Natural killer cell (primary cell): ENCODE measurements at regions of chr3 and their contacts with region 1.

Region 1: DNA sequence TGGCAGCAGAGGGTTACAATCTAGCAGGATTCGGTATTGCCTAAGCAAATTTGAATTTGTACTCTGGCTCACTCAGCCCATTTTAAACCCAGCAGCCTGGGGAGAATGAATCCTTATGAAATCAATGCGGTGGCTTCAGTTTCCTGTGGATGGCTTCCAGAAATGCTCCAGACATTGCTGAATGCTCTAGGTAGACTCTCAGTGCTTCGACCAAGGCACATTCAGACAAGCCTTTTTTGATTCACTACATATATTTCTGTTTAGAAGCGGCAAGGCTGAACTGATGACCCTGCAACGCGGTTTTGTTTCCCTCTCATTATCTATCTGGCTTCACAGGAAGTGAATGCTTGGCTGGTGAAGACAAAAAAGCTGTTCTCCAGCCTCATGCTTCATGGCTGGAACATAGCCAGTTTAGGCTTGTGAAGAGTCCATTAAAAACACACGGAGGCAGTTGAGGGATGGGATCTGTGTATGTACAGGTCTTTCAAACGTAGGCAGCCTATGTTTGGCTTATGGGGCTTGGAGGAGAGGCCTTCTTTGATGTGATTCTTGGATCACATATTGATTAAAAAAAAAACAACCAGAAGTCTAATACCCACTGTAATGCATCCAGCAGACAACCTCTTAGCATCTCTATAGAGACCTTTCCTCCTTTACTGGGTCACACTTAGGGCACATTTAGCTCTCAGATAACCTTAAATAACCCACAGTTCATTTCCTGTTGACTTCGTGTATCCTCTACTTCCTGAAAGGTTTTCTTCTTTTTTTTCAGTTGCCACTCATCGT is 400.2 kb upstream of the TBL1XR1 start:
- DNase-seq: peak; percentile 22 to 73
- ATAC-seq: peak; percentile 83 to 86 (median 84)
- H3K4me3 ChIP-seq: no peak overlapping the region
- H3K4me3 Mint-ChIP-seq: peak overlapping the region; percentile 72
- H3K27ac ChIP-seq: peak overlapping the region; percentile 52
- H3K27ac Mint-ChIP-seq: peak overlapping the region; percentile 89 to 94
- H3K4me1 ChIP-seq: peaks cover 24% of the 10 kb centered on the region
- H3K4me1 Mint-ChIP-seq: peaks cover 64 to 67% of the 10 kb centered on the region in 2 donors
- H3K27me3 ChIP-seq: no peaks in the 10 kb centered on the region
- H3K27me3 Mint-ChIP-seq: no peaks in the 10 kb centered on the region
- CTCF ChIP-seq: no peak

Region 2: GRCh38 chr3:177538750-177539730 is 58.5 kb before region 1 on chr3:
- intact Hi-C with region 1: loop called (anchors 10 kb)
- DNase-seq: peak in 1 of 2 donors; percentile 62
- ATAC-seq: peak; percentile 57 to 90 (median 74)
- H3K4me3 ChIP-seq: no peak overlapping the region
- H3K4me3 Mint-ChIP-seq: peak overlapping the region; percentile 91
- H3K27ac ChIP-seq: peak overlapping the region; percentile 63
- H3K27ac Mint-ChIP-seq: peak overlapping the region; percentile 90 to 92
- H3K4me1 ChIP-seq: peaks cover 19% of the 10 kb centered on the region
- H3K4me1 Mint-ChIP-seq: peaks cover 31 to 47% of the 10 kb centered on the region in 2 donors
- H3K27me3 ChIP-seq: no peaks in the 10 kb centered on the region
- H3K27me3 Mint-ChIP-seq: no peaks in the 10 kb centered on the region
- CTCF ChIP-seq: no peak

Region 3: GRCh38 chr3:177646749-177647148 is 49.2 kb after region 1 on chr3:
- intact Hi-C with region 1: loop called (anchors 2 kb)
- DNase-seq: peak; percentile 28 to 57
- ATAC-seq: peak; percentile 52 to 71 (median 65)
- H3K4me3 ChIP-seq: no peak overlapping the region
- H3K4me3 Mint-ChIP-seq: peak overlapping the region; percentile 91
- H3K27ac ChIP-seq: peak overlapping the region; percentile 24
- H3K27ac Mint-ChIP-seq: peak overlapping the region; percentile 88
- H3K4me1 ChIP-seq: peaks cover 36% of the 10 kb centered on the region
- H3K4me1 Mint-ChIP-seq: peaks cover 62 to 70% of the 10 kb centered on the region in 2 donors
- H3K27me3 ChIP-seq: no peaks in the 10 kb centered on the region
- H3K27me3 Mint-ChIP-seq: no peaks in the 10 kb centered on the region
- CTCF ChIP-seq: no peak

Region 4: GRCh38 chr3:177679568-177680441 is 82.3 kb after region 1 on chr3:
- intact Hi-C with region 1: loop called (anchors 10 kb)
- DNase-seq: peak in 1 of 2 donors; percentile 35
- ATAC-seq: peak; percentile 57 to 80 (median 65)
- H3K4me3 ChIP-seq: no peak overlapping the region
- H3K4me3 Mint-ChIP-seq: peak overlapping the region; percentile 25
- H3K27ac ChIP-seq: peak overlapping the region; percentile 57
- H3K27ac Mint-ChIP-seq: peak overlapping the region; percentile 82 to 84
- H3K4me1 ChIP-seq: peaks cover 23% of the 10 kb centered on the region
- H3K4me1 Mint-ChIP-seq: peaks cover 55 to 59% of the 10 kb centered on the region in 2 donors
- H3K27me3 ChIP-seq: no peaks in the 10 kb centered on the region
- H3K27me3 Mint-ChIP-seq: no peaks in the 10 kb centered on the region
- CTCF ChIP-seq: no peak